HepG2 (cell line): ENCODE measurements at regions of chr6 and their contacts with region 1.

Region 1: GRCh38 chr6:150377211-150377781 is 8.5 kb downstream of the IYD start:
- DNase-seq: peak; percentile 81
- ATAC-seq: peak; percentile 99
- H3K4me3 ChIP-seq: no peak overlapping the region
- H3K27ac ChIP-seq: no peak overlapping the region
- H3K4me1 ChIP-seq: peaks cover 15% of the 10 kb centered on the region
- H3K27me3 ChIP-seq: no peaks in the 10 kb centered on the region; a peak in 1 of 5 replicates
- CTCF ChIP-seq: no peak
- EP300 ChIP-seq: peak in 1 of 2 experiments; percentile 33; a peak in 1 of 4 replicates
- POLR2A ChIP-seq: no peak
- RAD21 ChIP-seq: no peak

Region 2: GRCh38 chr6:150354754-150355571 is 22.3 kb before region 1 on chr6:
- CTCF ChIA-PET with region 1: no interaction called
- POLR2A ChIA-PET with region 1: no interaction called
- in situ Hi-C with region 1: no loop called
- intact Hi-C with region 1: no loop called
- DNase-seq: no peak
- ATAC-seq: no peak
- H3K4me3 ChIP-seq: no peak overlapping the region
- H3K27ac ChIP-seq: no peak overlapping the region
- H3K4me1 ChIP-seq: no peaks in the 10 kb centered on the region
- H3K27me3 ChIP-seq: no peaks in the 10 kb centered on the region
- CTCF ChIP-seq: no peak
- EP300 ChIP-seq: no peak
- POLR2A ChIP-seq: no peak
- RAD21 ChIP-seq: no peak

Region 3: DNA sequence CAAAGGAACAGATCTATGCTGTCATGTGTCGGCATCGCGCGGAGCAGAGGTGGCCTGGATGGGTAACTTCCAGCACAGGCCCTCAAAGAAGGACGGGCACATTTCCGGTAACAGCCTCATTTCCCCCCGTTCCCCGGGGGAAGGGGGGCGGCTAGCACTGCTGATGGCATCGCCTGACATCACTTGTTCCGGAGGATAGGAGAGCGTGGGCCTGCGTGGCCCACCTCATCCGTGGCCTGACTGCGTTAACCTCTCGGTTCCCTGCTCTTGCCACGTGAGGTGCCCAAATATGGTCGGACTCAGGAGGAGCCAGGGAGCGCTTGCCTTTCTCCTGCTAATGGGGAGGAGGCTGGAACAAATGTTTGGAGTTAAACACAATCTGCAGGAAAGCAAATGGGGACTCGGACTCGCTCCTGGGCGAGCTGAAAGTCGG is 862.3 kb after region 1 on chr6 and contains the start of gene AKAP12:
- CTCF ChIA-PET with region 1: no interaction called
- POLR2A ChIA-PET with region 1: no interaction called
- in situ Hi-C with region 1: no loop called
- intact Hi-C with region 1: loop called (anchors 10 kb)
- DNase-seq: no peak
- ATAC-seq: no peak; the same call in 2 of the 3 replicates
- H3K4me3 ChIP-seq: peak within 1 kb of the TSS; percentile 53 to 72 (median 65); a peak in 5 of 6 replicates
- H3K27ac ChIP-seq: no peak within 1 kb of the TSS
- H3K4me1 ChIP-seq: peaks cover 9% of the 10 kb centered on the region
- H3K27me3 ChIP-seq: peaks cover 6 to 48% of the 10 kb centered on the region in 2 experiments
- CTCF ChIP-seq: no peak
- EP300 ChIP-seq: no peak
- POLR2A ChIP-seq: no peak
- RAD21 ChIP-seq: no peak
- total RNA-seq, gene AKAP12: 10.6 and 14.9 TPM in 2 replicates